ENCODE measurements at regions of chr19 and their contacts with region 1.

Region 1: GRCh38 chr19:34712395-34713261 is 21.4 kb upstream of the ZNF181 start:
- DNase-seq: peak; percentile 82
- ATAC-seq: peak; percentile 89
- H3K4me3 ChIP-seq: no peak overlapping the region
- H3K27ac ChIP-seq: no peak overlapping the region
- H3K4me1 ChIP-seq: no peaks in the 10 kb centered on the region
- H3K27me3 ChIP-seq: no peaks in the 10 kb centered on the region
- CTCF ChIP-seq: peak; percentile 81
- POLR2A ChIP-seq: no peak
- RAD21 ChIP-seq: peak; percentile 86

Region 2: GRCh38 chr19:34134190-34135053 is 578.2 kb before region 1 on chr19:
- CTCF ChIA-PET with region 1: no interaction called
- POLR2A ChIA-PET with region 1: no interaction called
- dilution Hi-C with region 1: no loop called
- in situ Hi-C with region 1: loop called (anchors 25 kb)
- intact Hi-C with region 1: no loop called
- DNase-seq: peak; percentile 47
- ATAC-seq: peak; percentile 99
- H3K4me3 ChIP-seq: peak overlapping the region; percentile 60
- H3K27ac ChIP-seq: peak overlapping the region; percentile 70
- H3K4me1 ChIP-seq: no peaks in the 10 kb centered on the region
- H3K27me3 ChIP-seq: no peaks in the 10 kb centered on the region; the same call in 1 of the 2 replicates
- CTCF ChIP-seq: no peak
- POLR2A ChIP-seq: no peak
- RAD21 ChIP-seq: no peak

Region 3: GRCh38 chr19:34428549-34429285 is 283.9 kb before region 1 on chr19:
- CTCF ChIA-PET with region 1: no interaction called
- POLR2A ChIA-PET with region 1: no interaction called
- dilution Hi-C with region 1: no loop called
- in situ Hi-C with region 1: no loop called
- intact Hi-C with region 1: no loop called
- DNase-seq: peak; percentile 17
- ATAC-seq: peak; percentile 73
- H3K4me3 ChIP-seq: peak overlapping the region; percentile 99
- H3K27ac ChIP-seq: peak overlapping the region; percentile 84
- H3K4me1 ChIP-seq: peaks cover 18% of the 10 kb centered on the region
- H3K27me3 ChIP-seq: no peaks in the 10 kb centered on the region
- CTCF ChIP-seq: no peak
- POLR2A ChIP-seq: no peak
- RAD21 ChIP-seq: no peak

Region 4: GRCh38 chr19:34501339-34502320 is 211.0 kb before region 1 on chr19:
- CTCF ChIA-PET with region 1: no interaction called
- POLR2A ChIA-PET with region 1: no interaction called
- dilution Hi-C with region 1: no loop called
- in situ Hi-C with region 1: no loop called
- intact Hi-C with region 1: loop called (anchors 1 kb)
- DNase-seq: peak; percentile 86
- ATAC-seq: peak; percentile 98
- H3K4me3 ChIP-seq: no peak overlapping the region
- H3K27ac ChIP-seq: no peak overlapping the region
- H3K4me1 ChIP-seq: peaks cover 7% of the 10 kb centered on the region; the same call in 1 of the 2 replicates
- H3K27me3 ChIP-seq: no peaks in the 10 kb centered on the region
- CTCF ChIP-seq: peak; percentile 100
- POLR2A ChIP-seq: peak; percentile 38; the same call in 1 of the 2 replicates
- RAD21 ChIP-seq: peak; percentile 94

Region 5: DNA sequence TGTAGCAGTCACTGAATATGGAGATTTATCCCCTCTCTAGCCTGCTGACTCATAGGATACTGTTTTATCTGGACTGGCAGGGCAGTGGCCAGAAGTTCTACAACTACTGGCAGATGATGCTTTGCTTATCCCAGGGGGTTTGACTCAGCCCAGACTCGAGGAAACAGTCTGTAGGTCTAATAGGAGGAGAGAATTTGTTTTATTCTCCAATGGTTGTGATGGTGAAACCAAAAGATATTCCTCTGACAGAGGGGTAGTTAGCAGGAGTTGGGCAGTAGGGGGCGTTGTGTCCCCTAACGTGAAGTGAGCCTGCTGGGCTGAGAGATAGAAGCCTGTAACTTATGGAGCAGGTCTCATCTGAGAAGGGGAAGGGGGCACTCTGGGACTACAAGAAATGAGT is 156.1 kb before region 1 on chr19:
- CTCF ChIA-PET with region 1: no interaction called
- POLR2A ChIA-PET with region 1: no interaction called
- dilution Hi-C with region 1: no loop called
- in situ Hi-C with region 1: no loop called
- intact Hi-C with region 1: loop called (anchors 5 kb)
- DNase-seq: no peak
- ATAC-seq: peak; percentile 53
- H3K4me3 ChIP-seq: no peak overlapping the region
- H3K27ac ChIP-seq: no peak overlapping the region
- H3K4me1 ChIP-seq: no peaks in the 10 kb centered on the region
- H3K27me3 ChIP-seq: no peaks in the 10 kb centered on the region; the same call in 1 of the 2 replicates
- CTCF ChIP-seq: peak; percentile 27; the same call in 1 of the 2 replicates
- POLR2A ChIP-seq: no peak
- RAD21 ChIP-seq: no peak

Measured in IMR-90 (cell line).